ENCODE measurements at regions of chr19 and their contacts with region 1.

Region 1: GRCh38 chr19:37655689-37656371 is 565 bp upstream of the ZFP30 start:
- DNase-seq: peak; percentile 82 to 89
- ATAC-seq: peak; percentile 82

Region 2: DNA sequence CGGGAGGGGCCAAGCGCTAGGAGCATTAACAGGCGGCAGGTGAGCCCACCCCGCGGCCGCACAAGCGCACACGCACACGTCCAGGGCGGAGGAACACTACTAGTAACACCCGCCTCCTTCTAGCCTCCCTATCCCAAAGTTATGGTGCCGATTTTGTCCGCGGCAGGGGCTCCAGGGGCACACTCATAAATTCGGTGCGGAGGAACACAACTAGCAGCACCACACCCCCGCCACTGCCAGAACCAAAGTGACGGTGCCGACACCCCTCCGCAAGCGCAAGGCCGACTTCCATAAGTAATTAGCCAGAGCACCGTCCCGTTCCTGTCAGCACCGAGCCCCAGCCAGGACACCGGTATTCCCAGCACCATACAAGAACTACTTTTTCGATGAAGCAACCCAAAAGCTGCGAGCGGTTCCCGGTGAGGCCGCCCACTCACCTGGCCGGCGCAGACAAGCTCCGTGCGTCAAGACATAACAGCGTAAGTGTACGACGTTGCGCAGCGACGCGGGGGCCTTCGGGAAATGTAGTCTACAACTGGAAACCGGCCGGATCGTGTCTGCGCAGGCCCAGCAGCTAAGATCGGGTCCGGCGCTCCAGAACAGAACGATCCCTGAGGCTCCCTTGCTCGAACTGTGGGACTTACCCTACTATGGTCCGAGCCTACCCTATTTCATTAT is 61.4 kb before region 1 on chr19 and contains the starts of genes ZNF540 and ZNF571:
- intact Hi-C with region 1: loop called in 1 of 2 experiments (anchors 10 kb)
- DNase-seq: peak; percentile 96 to 97
- ATAC-seq: peak; percentile 98
- total RNA-seq, gene ZNF540: 0.92 to 1.3 TPM
- total RNA-seq, gene ZNF571: 2.6 to 2.8 TPM

Region 3: DNA sequence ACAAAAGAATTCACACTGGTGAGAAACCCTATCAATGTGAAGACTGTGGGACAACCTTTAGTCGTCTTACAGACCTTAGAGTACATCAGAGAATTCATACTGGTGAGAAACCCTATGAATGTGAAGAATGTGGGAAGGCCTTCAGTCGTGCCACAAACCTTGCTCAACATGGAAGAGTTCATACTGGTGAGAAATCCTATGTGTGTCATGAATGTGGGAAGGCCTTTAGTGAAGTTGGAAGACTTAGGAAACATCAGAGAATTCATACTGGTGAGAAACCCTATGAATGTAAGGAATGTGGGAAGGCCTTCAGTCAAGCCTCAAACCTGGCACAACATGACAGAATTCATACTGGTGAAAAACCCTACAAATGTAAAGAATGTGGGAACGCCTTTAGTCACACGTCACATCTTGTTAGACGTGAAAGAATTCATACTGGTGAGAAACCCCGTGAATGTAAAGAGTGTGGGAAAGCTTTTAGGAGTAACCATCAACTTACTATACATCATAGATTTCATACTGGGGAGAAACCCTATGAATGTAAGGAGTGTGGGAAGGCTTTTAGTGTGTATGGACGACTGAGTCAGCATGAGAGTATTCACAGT is 147.5 kb after region 1 on chr19:
- intact Hi-C with region 1: no loop called
- DNase-seq: no peak
- ATAC-seq: no peak